OCI-LY7 (cell line): ENCODE measurements at regions of chr2 and their contacts with region 1.

Region 1: DNA sequence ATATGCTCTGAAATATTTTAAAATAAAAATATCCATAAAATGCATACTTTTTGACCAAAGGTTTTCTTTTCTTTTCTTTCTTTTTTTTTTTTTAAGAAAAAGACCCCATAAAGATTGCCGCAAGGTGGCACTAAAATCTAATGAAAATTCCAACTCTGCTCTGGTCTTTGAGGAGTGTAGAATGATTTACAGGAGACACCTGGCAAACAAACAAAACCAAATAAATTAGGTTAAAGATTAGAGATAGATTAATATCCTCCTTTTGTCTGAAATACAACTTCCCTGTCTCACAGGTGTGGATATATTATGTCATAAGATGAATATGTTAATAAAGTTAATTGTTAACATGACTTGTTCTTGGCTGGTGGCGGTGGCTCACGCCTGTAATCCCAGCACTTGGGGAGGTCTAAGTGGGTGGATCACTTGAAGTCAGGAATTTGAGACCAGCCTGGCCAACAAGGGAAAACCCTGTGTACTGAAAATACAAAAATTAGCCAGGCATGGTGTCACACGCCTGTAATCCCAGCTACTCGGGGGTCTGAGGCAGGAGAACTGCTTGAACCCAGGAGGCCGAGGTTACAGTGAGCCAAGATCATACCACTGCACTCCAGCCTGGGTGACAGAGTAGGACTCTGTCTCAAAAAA is 3.5 kb upstream of the RHOB start:
- DNase-seq: peak; percentile 55
- H3K4me3 ChIP-seq: no peak overlapping the region
- H3K27ac ChIP-seq: no peak overlapping the region
- H3K4me1 ChIP-seq: peaks cover 3% of the 10 kb centered on the region
- CTCF ChIP-seq: peak; percentile 90

Region 2: GRCh38 chr2:20635675-20636584 is 192.5 kb after region 1 on chr2:
- CTCF ChIA-PET with region 1: no interaction called
- POLR2A ChIA-PET with region 1: no interaction called
- intact Hi-C with region 1: loop called (anchors 1 kb)
- DNase-seq: peak; percentile 49
- H3K4me3 ChIP-seq: no peak overlapping the region
- H3K27ac ChIP-seq: no peak overlapping the region
- H3K4me1 ChIP-seq: peaks cover 14% of the 10 kb centered on the region
- CTCF ChIP-seq: peak; percentile 75

Region 3: DNA sequence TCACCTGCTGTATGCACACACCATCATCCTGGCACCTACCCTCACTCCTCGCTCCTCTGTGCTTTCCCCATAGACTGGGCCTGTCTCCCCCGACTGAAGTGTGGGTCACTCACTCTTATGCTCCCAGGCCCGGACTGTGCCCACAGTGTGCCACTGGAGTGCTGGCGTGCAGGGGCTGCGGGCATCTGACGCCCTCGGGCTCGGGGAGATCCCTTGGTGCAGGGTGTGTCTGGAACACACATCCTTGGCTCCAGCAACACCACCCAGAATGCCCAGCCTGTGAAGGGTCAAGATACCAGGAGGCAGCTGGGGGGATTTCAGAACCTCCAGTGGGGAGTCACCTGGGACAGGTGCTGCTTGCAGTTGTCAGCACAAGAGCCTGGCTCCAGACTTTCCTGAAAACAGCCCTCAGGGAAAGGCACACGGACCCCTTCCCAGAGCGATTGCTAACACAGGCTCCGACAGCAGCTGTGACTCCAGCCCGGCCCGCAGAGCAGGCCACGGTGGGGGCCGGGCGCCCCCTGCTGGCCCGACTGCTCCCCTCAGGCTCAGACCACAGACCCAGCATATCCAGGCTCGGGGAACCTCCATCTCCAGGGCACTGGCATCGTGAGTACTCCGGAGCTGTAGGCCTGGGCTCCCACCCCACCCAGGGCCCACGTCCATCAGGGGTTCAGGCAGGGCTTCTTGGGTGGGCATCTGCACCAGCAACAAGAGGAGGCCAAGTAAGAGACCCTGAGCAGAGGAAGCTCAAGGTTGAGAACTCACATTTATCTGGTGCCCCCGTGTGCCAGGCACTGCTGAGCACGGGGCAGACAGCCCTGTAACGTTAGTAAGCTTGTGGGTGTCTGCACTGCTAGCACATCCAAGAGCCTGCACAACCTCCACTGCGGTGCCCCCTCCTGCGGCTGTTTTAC is 198.9 kb after region 1 on chr2:
- CTCF ChIA-PET with region 1: interaction called, 3 read pairs
- POLR2A ChIA-PET with region 1: interaction called, 6 read pairs
- intact Hi-C with region 1: loop called (anchors 1 kb)
- DNase-seq: peak; percentile 66
- H3K4me3 ChIP-seq: no peak overlapping the region
- H3K27ac ChIP-seq: no peak overlapping the region
- H3K4me1 ChIP-seq: no peaks in the 10 kb centered on the region
- CTCF ChIP-seq: peak; percentile 90